ENCODE measurements at regions of chr16 and their contacts with region 1.

Region 1: GRCh38 chr16:88700636-88701482 is 5.3 kb downstream of the RNF166 start:
- DNase-seq: peak; percentile 86
- H3K4me3 ChIP-seq: peak overlapping the region; percentile 89
- H3K27ac ChIP-seq: peak overlapping the region; percentile 71
- H3K4me1 ChIP-seq: peaks cover 67% of the 10 kb centered on the region
- CTCF ChIP-seq: no peak

Region 2: GRCh38 chr16:88523309-88524161 is 177.3 kb before region 1 on chr16:
- CTCF ChIA-PET with region 1: no interaction called
- POLR2A ChIA-PET with region 1: no interaction called
- intact Hi-C with region 1: no loop called
- DNase-seq: no peak
- H3K4me3 ChIP-seq: no peak overlapping the region
- H3K27ac ChIP-seq: no peak overlapping the region
- H3K4me1 ChIP-seq: peaks cover 6% of the 10 kb centered on the region
- CTCF ChIP-seq: no peak

Region 3: GRCh38 chr16:88569985-88570690 is 130.7 kb before region 1 on chr16 and contains the start of gene ZC3H18:
- CTCF ChIA-PET with region 1: no interaction called
- POLR2A ChIA-PET with region 1: no interaction called
- intact Hi-C with region 1: loop called (anchors 5 kb)
- DNase-seq: peak; percentile 98
- H3K4me3 ChIP-seq: peak within 1 kb of the TSS; percentile 98
- H3K27ac ChIP-seq: peak within 1 kb of the TSS; percentile 48
- H3K4me1 ChIP-seq: peaks cover 22% of the 10 kb centered on the region
- CTCF ChIP-seq: no peak
- total RNA-seq, gene ZC3H18: 22.2 and 26.6 TPM in 2 replicates

Region 4: GRCh38 chr16:88686439-88687253 is 14.2 kb before region 1 on chr16 and contains the start of gene SNAI3:
- CTCF ChIA-PET with region 1: no interaction called
- POLR2A ChIA-PET with region 1: no interaction called
- intact Hi-C with region 1: loop called (anchors 1 kb)
- DNase-seq: peak; percentile 89
- H3K4me3 ChIP-seq: peak within 1 kb of the TSS; percentile 77
- H3K27ac ChIP-seq: peak within 1 kb of the TSS; percentile 0
- H3K4me1 ChIP-seq: peaks cover 43% of the 10 kb centered on the region
- CTCF ChIP-seq: no peak
- total RNA-seq, gene SNAI3: 2.4 and 3.1 TPM in 2 replicates

Measured in OCI-LY7 (cell line).